IMR-90 (cell line): ENCODE measurements at regions of chr3 and their contacts with region 1.

Region 1: GRCh38 chr3:175002732-175003143 is 143.6 kb downstream of the NAALADL2 start:
- DNase-seq: peak; percentile 99
- ATAC-seq: peak; percentile 95
- H3K4me3 ChIP-seq: no peak overlapping the region
- H3K27ac ChIP-seq: peak overlapping the region; percentile 98; the same call in 1 of the 2 replicates
- H3K4me1 ChIP-seq: peaks cover 19% of the 10 kb centered on the region
- H3K27me3 ChIP-seq: no peaks in the 10 kb centered on the region
- CTCF ChIP-seq: no peak
- POLR2A ChIP-seq: no peak
- RAD21 ChIP-seq: 0 out of 2 replicates have a peak, but pooled peaks have one; percentile 16

Region 2: DNA sequence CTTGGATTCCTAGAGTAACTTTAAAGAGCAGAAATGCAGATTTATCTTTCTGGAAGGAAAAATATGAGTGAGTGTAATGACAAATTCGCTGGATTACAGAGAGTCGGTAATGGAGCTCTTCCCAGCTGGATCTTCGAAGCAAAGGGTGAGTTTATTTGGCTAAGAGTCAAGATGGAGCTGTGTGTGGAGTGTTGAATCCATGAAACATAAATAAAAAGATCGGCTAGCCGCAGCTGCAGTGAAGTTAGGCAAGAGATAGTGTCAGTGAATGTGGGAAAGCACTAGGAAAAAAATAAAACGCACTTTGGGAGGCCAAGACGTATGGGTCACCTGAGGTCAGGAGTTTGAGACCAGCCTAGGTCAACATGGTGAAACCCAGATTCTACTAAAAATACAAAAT is 133.3 kb before region 1 on chr3:
- CTCF ChIA-PET with region 1: no interaction called
- POLR2A ChIA-PET with region 1: no interaction called
- dilution Hi-C with region 1: no loop called
- in situ Hi-C with region 1: no loop called
- intact Hi-C with region 1: loop called (anchors 5 kb)
- DNase-seq: peak; percentile 93
- ATAC-seq: peak; percentile 93
- H3K4me3 ChIP-seq: peak overlapping the region; percentile 25; the same call in 1 of the 2 replicates
- H3K27ac ChIP-seq: peak overlapping the region; percentile 83; the same call in 1 of the 2 replicates
- H3K4me1 ChIP-seq: peaks cover 3% of the 10 kb centered on the region
- H3K27me3 ChIP-seq: no peaks in the 10 kb centered on the region
- CTCF ChIP-seq: no peak
- POLR2A ChIP-seq: no peak
- RAD21 ChIP-seq: no peak

Region 3: DNA sequence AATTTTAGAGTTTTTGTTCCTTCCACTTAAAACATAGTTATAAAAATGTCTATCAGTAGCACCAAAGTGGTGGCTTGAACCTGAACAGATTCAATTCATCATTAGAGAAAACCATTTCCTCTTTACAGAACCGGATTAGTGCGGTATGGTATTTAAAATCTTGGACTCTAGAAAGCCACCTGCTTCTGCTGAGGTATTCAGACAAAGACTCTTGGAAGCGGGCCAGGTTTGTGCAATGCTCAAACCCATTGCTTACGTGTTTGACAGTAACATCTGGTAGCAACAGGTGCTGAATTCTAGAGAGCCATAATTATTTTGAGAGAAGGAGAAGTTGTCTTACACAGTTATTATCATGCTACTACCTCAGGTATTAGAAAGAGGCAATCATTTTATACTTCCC is 146.9 kb after region 1 on chr3:
- CTCF ChIA-PET with region 1: no interaction called
- POLR2A ChIA-PET with region 1: no interaction called
- dilution Hi-C with region 1: no loop called
- in situ Hi-C with region 1: no loop called
- intact Hi-C with region 1: loop called (anchors 5 kb)
- DNase-seq: peak; percentile 5
- ATAC-seq: no peak
- H3K4me3 ChIP-seq: no peak overlapping the region
- H3K27ac ChIP-seq: no peak overlapping the region
- H3K4me1 ChIP-seq: no peaks in the 10 kb centered on the region
- H3K27me3 ChIP-seq: no peaks in the 10 kb centered on the region
- CTCF ChIP-seq: no peak
- POLR2A ChIP-seq: no peak
- RAD21 ChIP-seq: no peak

Region 4: DNA sequence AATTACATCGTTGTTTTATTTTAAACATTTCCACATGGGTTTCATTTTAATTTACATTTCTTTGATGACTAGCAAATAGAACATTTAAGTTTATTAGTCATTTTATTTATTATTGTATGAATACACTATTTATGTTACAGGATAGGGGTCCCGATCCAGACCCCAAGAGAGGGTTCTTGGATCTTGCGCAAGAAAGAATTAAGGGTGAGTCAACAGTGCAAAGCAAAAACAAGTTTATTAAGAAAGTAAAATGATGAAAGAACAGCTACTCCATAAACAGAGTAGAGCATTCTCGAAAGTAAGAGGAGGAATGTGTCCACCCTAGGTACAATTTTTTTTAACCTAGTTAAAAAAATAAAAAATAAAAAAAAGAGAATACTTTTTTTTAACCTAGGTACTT is 396.0 kb after region 1 on chr3:
- CTCF ChIA-PET with region 1: no interaction called
- POLR2A ChIA-PET with region 1: no interaction called
- dilution Hi-C with region 1: no loop called
- in situ Hi-C with region 1: no loop called
- intact Hi-C with region 1: loop called (anchors 2 kb)
- DNase-seq: peak; percentile 88
- ATAC-seq: peak; percentile 82
- H3K4me3 ChIP-seq: no peak overlapping the region
- H3K27ac ChIP-seq: no peak overlapping the region
- H3K4me1 ChIP-seq: peaks cover 12% of the 10 kb centered on the region
- H3K27me3 ChIP-seq: no peaks in the 10 kb centered on the region
- CTCF ChIP-seq: no peak
- POLR2A ChIP-seq: no peak
- RAD21 ChIP-seq: no peak

Region 5: DNA sequence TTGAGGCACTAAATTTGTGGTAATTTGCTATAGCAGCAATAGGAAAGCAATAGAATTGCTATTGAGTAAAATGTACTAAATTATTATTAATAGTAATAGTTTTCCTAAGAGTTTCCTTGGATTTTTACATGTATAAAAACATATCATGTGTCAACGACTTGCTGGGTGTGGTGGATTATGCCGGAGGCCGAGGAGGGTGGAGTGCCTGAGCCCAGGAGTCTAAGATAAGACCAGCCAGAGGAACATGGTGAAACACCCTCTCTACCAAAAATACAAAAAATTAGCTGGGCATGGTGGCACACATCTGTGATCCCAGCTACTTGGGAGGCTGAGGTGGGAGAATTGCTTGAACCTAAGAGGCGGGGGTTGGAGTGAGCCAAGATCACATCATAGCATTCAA is 1444.6 kb after region 1 on chr3:
- CTCF ChIA-PET with region 1: no interaction called
- POLR2A ChIA-PET with region 1: interaction called, 12 read pairs
- dilution Hi-C with region 1: no loop called
- in situ Hi-C with region 1: no loop called
- intact Hi-C with region 1: no loop called
- DNase-seq: no peak
- ATAC-seq: no peak
- H3K4me3 ChIP-seq: no peak overlapping the region
- H3K27ac ChIP-seq: no peak overlapping the region
- H3K4me1 ChIP-seq: no peaks in the 10 kb centered on the region
- H3K27me3 ChIP-seq: no peaks in the 10 kb centered on the region
- CTCF ChIP-seq: no peak
- POLR2A ChIP-seq: no peak
- RAD21 ChIP-seq: no peak